ENCODE measurements at regions of chr1 and their contacts with region 1.

Region 1: GRCh38 chr1:3668585-3669300 is 16.4 kb downstream of the TP73 start:
- DNase-seq: no peak
- ATAC-seq: no peak
- H3K4me3 ChIP-seq: no peak overlapping the region
- H3K27ac ChIP-seq: no peak overlapping the region
- H3K4me1 ChIP-seq: peaks cover 72% of the 10 kb centered on the region
- H3K27me3 ChIP-seq: no peaks in the 10 kb centered on the region
- CTCF ChIP-seq: no peak
- EP300 ChIP-seq: no peak
- POLR2A ChIP-seq: no peak
- RAD21 ChIP-seq: no peak

Region 2: DNA sequence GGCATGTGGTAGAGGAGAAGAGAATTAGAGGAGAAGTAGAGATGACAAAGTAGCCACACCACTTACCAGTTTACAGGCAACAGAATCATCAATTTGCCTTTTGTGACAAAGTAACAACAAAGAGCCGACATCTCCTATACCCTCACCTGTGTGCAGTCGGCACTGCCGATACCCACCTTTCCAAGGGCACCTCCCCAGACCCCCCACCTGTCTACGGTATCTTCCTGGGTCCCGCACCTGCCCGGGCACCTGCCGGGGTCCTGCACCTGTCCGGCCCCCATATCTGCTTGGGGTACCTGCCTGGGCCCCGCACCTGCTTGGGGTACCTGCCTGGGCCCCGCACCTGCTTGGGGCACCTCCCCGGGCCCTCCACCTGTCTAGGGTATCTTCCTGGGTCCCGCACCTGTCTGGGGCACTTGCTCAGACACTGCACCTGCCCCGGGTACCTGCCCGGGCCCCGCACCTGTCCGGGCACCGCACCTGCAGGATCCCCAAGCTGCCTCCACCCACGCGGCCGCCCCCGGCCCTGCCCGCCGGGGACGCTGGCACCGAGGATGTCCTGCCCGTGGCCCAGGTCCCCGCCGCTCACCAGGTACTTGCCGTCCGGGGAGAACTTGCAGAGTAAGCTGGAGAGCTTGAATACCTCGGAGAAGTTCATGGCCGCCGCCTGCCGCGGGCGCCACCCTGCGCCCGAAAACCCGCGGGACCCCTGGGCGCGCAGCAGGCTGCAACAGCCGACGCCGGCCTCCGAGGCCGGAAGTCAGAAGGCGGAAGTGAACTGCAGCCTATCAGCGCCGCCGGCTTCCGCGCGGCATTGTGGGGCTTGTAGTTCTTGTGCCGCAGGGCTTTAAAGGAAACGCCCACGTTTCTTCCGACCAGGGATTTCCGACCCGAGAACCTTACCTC is 19.1 kb before region 1 on chr1 and contains the start of gene WRAP73:
- CTCF ChIA-PET with region 1: interaction called, 91 read pairs
- POLR2A ChIA-PET with region 1: interaction called, 184 read pairs
- RAD21 ChIA-PET with region 1: interaction called, 117 read pairs
- SMC1A ChIA-PET with region 1: interaction called, 117 read pairs
- in situ Hi-C with region 1: no loop called
- intact Hi-C with region 1: no loop called
- DNase-seq: peak; percentile 76
- ATAC-seq: peak; percentile 74
- H3K4me3 ChIP-seq: peak within 1 kb of the TSS; percentile 84
- H3K27ac ChIP-seq: peak within 1 kb of the TSS; percentile 68; the same call in 1 of the 2 replicates
- H3K4me1 ChIP-seq: peaks cover 15% of the 10 kb centered on the region
- H3K27me3 ChIP-seq: no peaks in the 10 kb centered on the region
- CTCF ChIP-seq: peak; percentile 25 to 37 (median 32); a peak in 3 of 6 replicates
- EP300 ChIP-seq: no peak
- POLR2A ChIP-seq: peak; percentile 79
- RAD21 ChIP-seq: no peak
- polyA plus RNA-seq, gene WRAP73: 3.2 to 7.6 TPM

Region 3: DNA sequence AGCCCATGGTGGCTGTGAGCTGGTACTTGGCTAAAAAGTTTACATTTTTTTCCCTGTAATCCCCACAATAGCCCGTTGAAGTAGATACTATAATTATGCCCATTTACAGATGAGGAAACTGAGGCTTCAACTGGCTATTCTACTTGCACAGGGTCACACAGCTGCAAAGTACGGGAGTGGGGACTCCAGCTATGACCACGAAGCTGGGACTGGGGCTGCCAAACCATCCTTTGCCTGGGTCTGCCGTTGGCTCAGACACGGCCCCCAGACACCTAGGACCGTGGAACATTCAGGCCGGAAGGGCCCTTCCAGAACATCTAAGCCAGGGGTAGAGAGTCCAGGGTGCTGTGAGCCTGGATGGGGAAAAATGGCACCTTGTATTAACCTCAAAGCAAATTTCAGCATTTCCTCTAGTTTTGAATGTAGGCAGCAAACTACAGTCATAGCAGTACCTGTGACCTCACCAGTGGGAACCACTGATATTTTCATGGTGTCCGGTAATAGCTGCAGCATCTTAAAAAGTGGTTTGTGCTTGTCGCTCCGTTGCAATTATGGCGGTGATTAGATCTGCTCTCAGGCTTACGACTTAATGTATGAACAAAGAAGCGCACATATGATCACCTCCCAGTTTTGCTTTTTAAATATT is 12.2 kb before region 1 on chr1:
- CTCF ChIA-PET with region 1: interaction called, 91 read pairs
- POLR2A ChIA-PET with region 1: interaction called, 184 read pairs
- RAD21 ChIA-PET with region 1: interaction called, 117 read pairs
- SMC1A ChIA-PET with region 1: interaction called, 117 read pairs
- in situ Hi-C with region 1: no loop called
- intact Hi-C with region 1: loop called (anchors 1 kb)
- DNase-seq: peak; percentile 92
- ATAC-seq: peak; percentile 64
- H3K4me3 ChIP-seq: peak overlapping the region; percentile 66
- H3K27ac ChIP-seq: peak overlapping the region; percentile 93
- H3K4me1 ChIP-seq: peaks cover 48% of the 10 kb centered on the region
- H3K27me3 ChIP-seq: no peaks in the 10 kb centered on the region
- CTCF ChIP-seq: no peak
- EP300 ChIP-seq: peak in 1 of 2 experiments; percentile 96; a peak in 3 of 4 replicates
- POLR2A ChIP-seq: no peak
- RAD21 ChIP-seq: no peak

Region 4: DNA sequence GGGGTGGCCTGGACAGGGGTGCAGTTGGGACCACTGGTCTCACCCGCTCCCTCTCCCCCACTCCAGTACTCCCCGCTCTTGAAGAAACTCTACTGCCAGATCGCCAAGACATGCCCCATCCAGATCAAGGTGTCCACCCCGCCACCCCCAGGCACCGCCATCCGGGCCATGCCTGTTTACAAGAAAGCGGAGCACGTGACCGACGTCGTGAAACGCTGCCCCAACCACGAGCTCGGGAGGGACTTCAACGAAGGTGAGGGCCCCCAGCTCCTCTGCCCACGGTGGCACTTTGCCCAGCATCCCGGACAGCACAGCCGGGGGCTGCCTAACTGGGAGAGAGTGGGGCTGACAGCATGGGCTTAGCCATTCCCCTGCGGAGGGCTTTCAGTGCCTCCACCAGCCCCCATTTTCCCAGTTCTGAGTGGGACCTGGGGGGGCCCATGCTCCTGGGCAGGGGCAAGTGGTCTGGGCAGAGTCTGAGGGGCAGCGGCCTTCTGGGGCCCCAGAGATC is 53.3 kb after region 1 on chr1:
- CTCF ChIA-PET with region 1: interaction called, 10 read pairs
- POLR2A ChIA-PET with region 1: interaction called, 3 read pairs
- RAD21 ChIA-PET with region 1: interaction called, 9 read pairs
- SMC1A ChIA-PET with region 1: interaction called, 5 read pairs
- in situ Hi-C with region 1: no loop called
- intact Hi-C with region 1: loop called (anchors 5 kb)
- DNase-seq: no peak
- ATAC-seq: no peak
- H3K4me3 ChIP-seq: no peak overlapping the region
- H3K27ac ChIP-seq: no peak overlapping the region
- H3K4me1 ChIP-seq: peaks cover 6% of the 10 kb centered on the region; the same call in 1 of the 2 replicates
- H3K27me3 ChIP-seq: no peaks in the 10 kb centered on the region
- CTCF ChIP-seq: no peak
- EP300 ChIP-seq: no peak
- POLR2A ChIP-seq: no peak
- RAD21 ChIP-seq: no peak

Region 5: GRCh38 chr1:3727042-3727824 is 58.5 kb after region 1 on chr1:
- CTCF ChIA-PET with region 1: interaction called, 10 read pairs
- POLR2A ChIA-PET with region 1: interaction called, 3 read pairs
- RAD21 ChIA-PET with region 1: interaction called, 9 read pairs
- SMC1A ChIA-PET with region 1: interaction called, 5 read pairs
- in situ Hi-C with region 1: no loop called
- intact Hi-C with region 1: loop called (anchors 5 kb)
- DNase-seq: no peak
- ATAC-seq: peak; percentile 75
- H3K4me3 ChIP-seq: no peak overlapping the region
- H3K27ac ChIP-seq: no peak overlapping the region
- H3K4me1 ChIP-seq: no peaks in the 10 kb centered on the region
- H3K27me3 ChIP-seq: no peaks in the 10 kb centered on the region
- CTCF ChIP-seq: peak; percentile 48 to 50 (median 49); a peak in 5 of 6 replicates
- EP300 ChIP-seq: no peak
- POLR2A ChIP-seq: no peak
- RAD21 ChIP-seq: peak; percentile 47

Measured in GM12878 (cell line).